ENCODE measurements at regions of chr14 and their contacts with region 1.

Region 1: GRCh38 chr14:77023001-77023996 is 5.2 kb downstream of the IRF2BPL start:
- DNase-seq: no peak
- ATAC-seq: peak; percentile 7
- H3K4me3 ChIP-seq: no peak overlapping the region
- H3K27ac ChIP-seq: peak overlapping the region; percentile 56
- H3K4me1 ChIP-seq: peaks cover 51% of the 10 kb centered on the region
- H3K27me3 ChIP-seq: no peaks in the 10 kb centered on the region
- CTCF ChIP-seq: 0 out of 6 replicates have a peak, but pooled peaks of 2 of the 3 experiments have one; percentile 2 to 14
- EP300 ChIP-seq: no peak
- POLR2A ChIP-seq: no peak
- RAD21 ChIP-seq: no peak

Region 2: DNA sequence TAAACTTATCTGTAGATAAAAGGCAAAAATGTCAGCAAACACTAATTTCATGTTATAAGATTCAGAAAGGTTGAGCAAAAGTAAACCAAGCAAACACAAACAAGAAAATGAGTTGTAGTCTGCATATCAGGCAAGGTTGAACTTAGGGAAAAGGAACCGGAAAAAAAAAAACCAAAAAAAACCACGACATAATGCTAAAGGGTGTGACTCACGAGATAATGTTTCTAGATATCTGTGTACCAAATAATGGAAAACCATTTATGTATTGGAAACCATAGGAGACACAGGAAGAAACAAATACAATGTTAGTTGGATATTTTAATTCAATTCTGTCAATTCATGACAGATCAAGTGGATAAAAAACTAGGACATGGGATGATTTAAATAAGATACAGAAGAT is 811.1 kb before region 1 on chr14:
- CTCF ChIA-PET with region 1: no interaction called
- POLR2A ChIA-PET with region 1: no interaction called
- RAD21 ChIA-PET with region 1: no interaction called
- SMC1A ChIA-PET with region 1: no interaction called
- in situ Hi-C with region 1: no loop called
- intact Hi-C with region 1: no loop called
- DNase-seq: no peak
- ATAC-seq: no peak
- H3K4me3 ChIP-seq: no peak overlapping the region
- H3K27ac ChIP-seq: no peak overlapping the region
- H3K4me1 ChIP-seq: no peaks in the 10 kb centered on the region
- H3K27me3 ChIP-seq: no peaks in the 10 kb centered on the region
- CTCF ChIP-seq: no peak
- EP300 ChIP-seq: no peak
- POLR2A ChIP-seq: no peak
- RAD21 ChIP-seq: no peak

Region 3: DNA sequence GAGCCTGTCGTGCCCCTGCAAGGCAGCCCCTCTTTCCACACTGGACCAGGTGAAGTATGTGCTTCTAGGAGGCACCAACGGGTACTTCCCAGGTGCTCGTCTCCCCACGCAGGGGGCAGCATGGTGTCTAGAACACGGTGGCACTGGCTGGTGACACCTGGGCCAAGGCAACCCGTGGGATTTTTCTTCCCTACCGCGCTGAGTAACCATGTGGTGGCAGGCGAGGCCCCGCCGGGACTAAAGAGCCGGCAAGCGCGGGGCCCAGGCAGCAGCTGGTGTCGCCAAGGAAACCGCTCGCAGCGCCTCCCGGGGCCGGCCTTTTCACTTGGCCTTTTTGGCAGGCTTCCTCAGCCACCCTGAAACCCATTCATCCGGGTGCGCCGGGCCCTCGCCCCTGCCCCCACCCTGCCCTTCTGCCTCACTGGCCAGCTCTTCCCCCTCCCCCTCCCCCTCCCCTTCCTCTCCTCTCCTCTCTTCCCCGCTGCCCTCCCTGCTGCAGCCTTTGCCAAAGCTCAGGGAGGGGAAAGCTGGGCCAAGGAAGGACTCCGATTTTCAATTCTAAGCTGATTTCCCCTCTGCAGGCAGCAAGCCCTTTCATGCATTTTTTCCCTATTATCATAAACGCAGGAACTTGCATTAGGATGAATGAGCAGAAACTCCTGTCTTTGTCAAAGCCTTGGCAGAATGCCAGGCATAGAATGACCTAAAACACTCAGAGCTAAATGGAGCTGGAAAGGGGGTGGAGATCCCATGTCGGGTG is 76.0 kb before region 1 on chr14:
- CTCF ChIA-PET with region 1: interaction called, 14 read pairs
- POLR2A ChIA-PET with region 1: interaction called, 12 read pairs
- RAD21 ChIA-PET with region 1: interaction called, 20 read pairs
- SMC1A ChIA-PET with region 1: interaction called, 5 read pairs
- in situ Hi-C with region 1: no loop called
- intact Hi-C with region 1: no loop called
- DNase-seq: peak; percentile 67
- ATAC-seq: peak; percentile 87
- H3K4me3 ChIP-seq: no peak overlapping the region
- H3K27ac ChIP-seq: peak overlapping the region; percentile 64
- H3K4me1 ChIP-seq: peaks cover 29% of the 10 kb centered on the region
- H3K27me3 ChIP-seq: no peaks in the 10 kb centered on the region
- CTCF ChIP-seq: peak; percentile 45 to 72 (median 58)
- EP300 ChIP-seq: peak in 1 of 2 experiments; percentile 65; a peak in 2 of 4 replicates
- POLR2A ChIP-seq: no peak
- RAD21 ChIP-seq: peak; percentile 72

Region 4: GRCh38 chr14:77033622-77034521 is 10.6 kb after region 1 on chr14:
- CTCF ChIA-PET with region 1: interaction called, 4 read pairs
- POLR2A ChIA-PET with region 1: interaction called, 151 read pairs
- RAD21 ChIA-PET with region 1: interaction called, 9 read pairs
- SMC1A ChIA-PET with region 1: interaction called, 121 read pairs
- in situ Hi-C with region 1: no loop called
- intact Hi-C with region 1: no loop called
- DNase-seq: peak; percentile 72
- ATAC-seq: peak; percentile 86
- H3K4me3 ChIP-seq: peak overlapping the region; percentile 78
- H3K27ac ChIP-seq: peak overlapping the region; percentile 99
- H3K4me1 ChIP-seq: peaks cover 61% of the 10 kb centered on the region
- H3K27me3 ChIP-seq: no peaks in the 10 kb centered on the region
- CTCF ChIP-seq: no peak
- EP300 ChIP-seq: peak in 1 of 2 experiments; percentile 47; a peak in 3 of 4 replicates
- POLR2A ChIP-seq: peak; percentile 85
- RAD21 ChIP-seq: no peak

Region 5: DNA sequence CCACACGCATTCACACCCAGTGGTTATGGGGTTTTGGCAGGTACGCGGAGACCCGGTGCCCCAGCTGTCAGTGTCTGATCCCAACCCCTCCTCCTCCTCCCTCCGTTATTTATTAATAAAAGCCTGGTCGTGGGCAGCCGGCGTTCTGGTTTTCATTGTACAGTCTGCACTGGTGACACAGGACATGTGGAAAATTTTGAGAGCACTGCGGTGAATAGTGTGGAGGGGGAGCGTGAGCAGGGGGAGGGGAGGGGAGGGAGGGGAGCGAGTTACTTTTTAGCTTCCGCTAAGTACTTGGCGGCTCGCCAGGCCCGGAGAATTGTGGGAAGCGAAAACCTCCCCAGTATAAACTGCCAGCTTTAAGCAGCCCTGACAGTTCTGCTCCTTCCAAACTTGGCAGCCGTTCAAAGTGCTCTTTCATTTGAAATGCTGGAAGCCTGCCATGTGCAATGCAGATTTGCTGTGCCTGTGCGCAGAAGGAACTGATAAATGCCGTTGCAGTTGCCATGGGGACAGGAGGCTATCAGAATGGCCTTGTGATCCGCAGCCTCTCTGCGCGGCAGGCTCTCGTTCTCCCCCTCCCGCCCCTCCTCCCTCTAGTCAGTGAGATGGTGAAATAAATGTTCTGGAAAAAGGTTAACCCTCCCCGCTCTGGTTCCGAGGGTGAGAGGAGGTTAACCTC is 16.9 kb after region 1 on chr14:
- CTCF ChIA-PET with region 1: interaction called, 8 read pairs
- POLR2A ChIA-PET with region 1: interaction called, 151 read pairs
- RAD21 ChIA-PET with region 1: interaction called, 86 read pairs
- SMC1A ChIA-PET with region 1: interaction called, 121 read pairs
- in situ Hi-C with region 1: no loop called
- intact Hi-C with region 1: no loop called
- DNase-seq: peak; percentile 99
- ATAC-seq: peak; percentile 75
- H3K4me3 ChIP-seq: peak overlapping the region; percentile 50
- H3K27ac ChIP-seq: peak overlapping the region; percentile 93
- H3K4me1 ChIP-seq: peaks cover 87% of the 10 kb centered on the region
- H3K27me3 ChIP-seq: no peaks in the 10 kb centered on the region
- CTCF ChIP-seq: no peak
- EP300 ChIP-seq: peak; percentile 42 to 61
- POLR2A ChIP-seq: peak; percentile 55; the same call in 1 of the 2 replicates
- RAD21 ChIP-seq: no peak